T-cell (primary cell): ENCODE measurements at regions of chr6 and their contacts with region 1.

Region 1: GRCh38 chr6:164990766-164991285 is 318.6 kb downstream of the C6orf118 start:
- DNase-seq: no peak
- ATAC-seq: no peak
- H3K4me3 ChIP-seq: no peak overlapping the region
- H3K4me3 Mint-ChIP-seq: no peak overlapping the region
- H3K27ac ChIP-seq: no peak overlapping the region
- H3K27ac Mint-ChIP-seq: no peak overlapping the region
- H3K4me1 ChIP-seq: no peaks in the 10 kb centered on the region
- H3K4me1 Mint-ChIP-seq: no peaks in the 10 kb centered on the region
- H3K27me3 ChIP-seq: no peaks in the 10 kb centered on the region
- H3K27me3 Mint-ChIP-seq: no peaks in the 10 kb centered on the region

Region 2: DNA sequence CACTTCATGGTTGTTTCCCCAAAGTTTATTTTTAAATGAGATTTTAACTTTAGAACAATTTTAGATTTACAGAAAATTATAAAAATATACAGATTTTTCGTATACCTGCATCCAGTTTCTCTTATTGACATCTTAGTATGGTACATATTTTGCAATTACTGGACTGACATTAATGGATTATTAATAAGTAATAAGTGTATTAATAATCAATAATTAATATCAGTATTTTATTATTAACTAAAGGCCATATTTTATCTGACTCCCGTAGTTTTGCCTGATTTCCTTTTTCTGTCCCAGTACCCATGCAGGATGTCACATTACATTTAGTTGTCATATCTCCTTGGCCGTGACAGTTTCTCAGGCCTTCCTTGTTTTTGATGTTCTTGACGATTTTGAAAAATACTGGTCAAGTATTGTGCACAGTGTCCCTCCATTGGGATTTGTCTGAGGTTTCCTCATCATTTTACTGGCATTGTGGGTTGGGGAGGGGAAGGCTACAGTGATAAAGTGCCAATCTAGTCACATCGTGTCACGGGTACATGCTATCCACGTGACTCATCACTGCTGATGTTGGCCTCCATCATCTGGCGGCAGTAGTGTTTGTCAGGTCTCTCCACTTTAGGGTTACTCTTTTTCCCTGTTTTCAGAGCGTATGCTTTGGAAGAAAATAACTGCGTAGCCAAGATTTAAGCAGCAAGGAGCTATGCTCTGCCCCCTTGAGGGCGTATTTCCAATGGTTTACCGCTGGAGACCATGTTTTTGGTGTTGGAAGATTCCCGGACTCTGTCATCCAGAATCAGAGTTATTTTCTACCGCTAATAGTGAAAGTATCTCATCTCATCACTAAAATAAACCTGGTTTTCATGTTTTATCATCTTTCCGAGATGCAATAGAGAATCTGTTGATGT is 11.8 kb after region 1 on chr6:
- CTCF ChIA-PET with region 1: no interaction called
- POLR2A ChIA-PET with region 1: no interaction called
- DNase-seq: no peak
- ATAC-seq: no peak
- H3K4me3 ChIP-seq: no peak overlapping the region
- H3K4me3 Mint-ChIP-seq: no peak overlapping the region
- H3K27ac ChIP-seq: no peak overlapping the region
- H3K27ac Mint-ChIP-seq: no peak overlapping the region
- H3K4me1 ChIP-seq: no peaks in the 10 kb centered on the region
- H3K4me1 Mint-ChIP-seq: no peaks in the 10 kb centered on the region
- H3K27me3 ChIP-seq: no peaks in the 10 kb centered on the region
- H3K27me3 Mint-ChIP-seq: no peaks in the 10 kb centered on the region

Region 3: GRCh38 chr6:165071906-165072305 is 81.1 kb after region 1 on chr6:
- CTCF ChIA-PET with region 1: no interaction called
- POLR2A ChIA-PET with region 1: interaction called in 1 of 2 experiments, 13 read pairs
- DNase-seq: no peak
- ATAC-seq: no peak
- H3K4me3 ChIP-seq: no peak overlapping the region
- H3K4me3 Mint-ChIP-seq: no peak overlapping the region
- H3K27ac ChIP-seq: no peak overlapping the region
- H3K27ac Mint-ChIP-seq: no peak overlapping the region
- H3K4me1 ChIP-seq: no peaks in the 10 kb centered on the region
- H3K4me1 Mint-ChIP-seq: no peaks in the 10 kb centered on the region
- H3K27me3 ChIP-seq: no peaks in the 10 kb centered on the region
- H3K27me3 Mint-ChIP-seq: no peaks in the 10 kb centered on the region

Region 4: DNA sequence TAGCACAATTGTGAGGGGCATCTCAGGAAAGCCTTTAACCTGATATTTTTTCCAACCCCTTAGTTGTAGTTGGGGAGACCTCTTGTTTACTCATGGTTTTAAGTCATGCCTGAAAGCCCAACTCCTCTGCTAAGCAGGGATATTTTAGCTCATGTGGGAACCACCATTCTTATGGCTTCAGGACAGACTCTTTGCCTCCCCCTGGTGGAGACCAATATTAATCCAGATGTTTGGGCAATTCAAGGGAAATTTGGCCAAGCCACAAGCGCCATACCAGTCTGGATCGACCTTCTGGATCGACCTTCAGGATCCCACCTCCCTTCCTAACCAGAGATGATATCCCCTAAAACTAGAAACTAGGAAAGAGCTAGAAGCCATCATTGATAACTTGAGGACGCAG is 107.3 kb after region 1 on chr6:
- CTCF ChIA-PET with region 1: no interaction called
- POLR2A ChIA-PET with region 1: no interaction called
- DNase-seq: no peak
- ATAC-seq: no peak
- H3K4me3 ChIP-seq: no peak overlapping the region
- H3K4me3 Mint-ChIP-seq: no peak overlapping the region
- H3K27ac ChIP-seq: no peak overlapping the region
- H3K27ac Mint-ChIP-seq: no peak overlapping the region
- H3K4me1 ChIP-seq: no peaks in the 10 kb centered on the region
- H3K4me1 Mint-ChIP-seq: no peaks in the 10 kb centered on the region
- H3K27me3 ChIP-seq: no peaks in the 10 kb centered on the region
- H3K27me3 Mint-ChIP-seq: no peaks in the 10 kb centered on the region